ENCODE measurements at regions of chr1 and their contacts with region 1.

Region 1: DNA sequence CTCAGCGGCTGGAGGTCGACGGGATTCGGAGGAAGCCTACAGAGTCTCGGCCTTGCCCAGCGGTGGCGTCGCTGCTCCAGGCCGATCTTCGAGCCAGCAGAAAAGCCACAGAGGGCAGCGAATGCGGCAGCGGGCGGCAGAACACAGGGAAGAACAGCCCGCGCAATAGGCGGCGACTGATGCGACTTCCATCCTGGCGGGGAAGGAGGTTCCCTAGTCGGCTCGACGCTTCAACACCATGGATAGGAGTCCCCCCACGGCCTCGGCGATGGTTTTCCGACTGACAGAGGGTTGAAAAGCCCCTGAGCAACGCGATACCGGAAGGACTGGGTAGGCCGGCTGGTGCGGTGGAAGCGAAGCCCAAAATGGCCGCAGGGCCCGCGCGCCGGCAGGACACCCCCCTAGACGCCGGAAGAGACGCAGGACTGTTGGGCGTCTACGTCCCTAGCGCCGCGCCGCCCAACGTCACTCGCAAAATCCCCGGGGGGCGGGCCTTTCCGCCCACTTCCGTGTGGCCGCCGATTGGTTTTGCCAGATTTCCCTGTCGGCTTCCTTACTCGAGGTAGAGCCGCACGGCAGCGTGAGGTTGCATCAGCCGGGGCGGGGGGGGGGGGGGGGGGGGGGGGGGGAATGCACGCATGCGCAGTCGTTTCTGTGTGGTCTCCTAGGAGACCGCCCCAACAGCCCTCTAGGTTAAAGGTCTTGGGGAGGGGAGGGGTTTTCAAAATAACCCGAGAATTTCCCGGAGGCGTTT is at the start of gene PPP1R15B:
- DNase-seq: peak; percentile 98
- H3K4me3 Mint-ChIP-seq: peak within 1 kb of the TSS; percentile 99
- H3K27ac Mint-ChIP-seq: peak within 1 kb of the TSS; percentile 99
- H3K4me1 Mint-ChIP-seq: peaks cover 12% of the 10 kb centered on the region
- H3K27me3 Mint-ChIP-seq: no peaks in the 10 kb centered on the region
- total RNA-seq, gene PPP1R15B: 75.8 and 76.2 TPM in 2 replicates

Region 2: GRCh38 chr1:204377795-204378608 is 33.6 kb before region 1 on chr1:
- intact Hi-C with region 1: loop called (anchors 2 kb)
- DNase-seq: peak; percentile 25
- H3K4me3 Mint-ChIP-seq: peak overlapping the region; percentile 82
- H3K27ac Mint-ChIP-seq: no peak overlapping the region
- H3K4me1 Mint-ChIP-seq: peaks cover 8% of the 10 kb centered on the region
- H3K27me3 Mint-ChIP-seq: peaks cover 39% of the 10 kb centered on the region

Region 3: DNA sequence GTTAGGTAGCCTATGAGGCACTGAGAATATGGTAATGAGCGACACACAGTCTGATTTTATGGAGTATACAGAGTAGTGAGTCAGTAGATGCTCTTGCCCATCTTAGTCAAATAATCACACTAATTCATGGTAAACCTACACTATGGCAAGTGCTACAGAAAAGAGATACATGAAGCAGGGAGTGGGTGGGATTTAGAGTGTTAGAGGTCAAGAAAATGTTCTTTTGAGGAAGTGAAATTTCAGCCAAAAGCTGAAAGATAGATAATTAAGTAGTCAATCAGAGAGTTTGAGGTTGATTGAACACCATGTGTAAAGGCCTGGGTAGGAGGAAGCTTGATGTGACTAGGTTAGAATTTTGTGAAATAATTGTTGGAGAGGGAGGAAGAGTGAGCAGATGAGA is 119.3 kb after region 1 on chr1:
- intact Hi-C with region 1: no loop called
- DNase-seq: no peak
- H3K4me3 Mint-ChIP-seq: no peak overlapping the region
- H3K27ac Mint-ChIP-seq: no peak overlapping the region
- H3K4me1 Mint-ChIP-seq: peaks cover 4% of the 10 kb centered on the region
- H3K27me3 Mint-ChIP-seq: no peaks in the 10 kb centered on the region